Caco-2 (cell line): ENCODE measurements at regions of chr22 and their contacts with region 1.

Region 1: DNA sequence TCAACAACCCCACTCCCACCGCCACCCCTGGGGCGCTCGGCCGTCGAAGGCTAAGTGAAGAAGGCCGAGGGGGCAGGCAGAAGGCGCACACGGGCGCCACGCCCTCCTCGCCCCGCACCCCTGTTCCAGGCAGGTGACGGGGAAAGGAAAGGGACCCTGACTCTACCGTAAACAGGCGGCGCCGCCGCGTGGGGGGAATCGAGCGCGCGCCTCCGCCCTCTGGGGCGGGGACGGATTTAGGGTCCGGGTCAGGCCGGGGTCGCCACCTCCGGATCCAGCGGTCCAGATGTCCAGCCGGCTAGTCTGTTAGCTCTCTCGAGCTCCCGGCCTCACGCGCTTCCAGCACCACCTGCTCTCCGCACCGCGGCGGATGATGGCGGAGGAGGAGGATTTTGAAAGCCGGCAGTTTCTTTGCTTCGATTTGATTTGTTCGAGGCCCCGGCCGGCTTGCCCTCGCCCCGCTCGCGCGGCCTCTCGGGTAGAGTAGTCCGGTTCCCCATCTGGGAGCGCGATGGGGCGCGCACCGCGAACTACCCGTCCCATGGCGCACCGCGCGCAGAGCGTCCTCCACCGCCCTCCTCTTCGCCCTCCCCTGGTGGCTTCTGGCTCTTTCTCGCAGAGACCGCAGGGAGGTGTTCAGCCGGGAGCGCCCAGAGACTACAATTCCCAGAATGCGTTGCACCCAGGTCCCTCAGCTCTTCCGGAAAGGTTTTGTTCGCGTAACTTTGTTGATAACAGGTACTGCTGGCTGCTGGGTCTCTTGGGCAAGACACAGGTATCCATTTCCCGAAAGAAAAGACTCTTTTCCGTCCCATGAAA is at the start of gene RANGAP1:
- DNase-seq: peak; percentile 98 to 99
- H3K4me3 ChIP-seq: peak within 1 kb of the TSS; percentile 78
- H3K4me3 Mint-ChIP-seq: peak within 1 kb of the TSS; percentile 88
- H3K27ac Mint-ChIP-seq: peak within 1 kb of the TSS; percentile 92
- H3K4me1 ChIP-seq: peaks cover 39% of the 10 kb centered on the region
- H3K4me1 Mint-ChIP-seq: peaks cover 32% of the 10 kb centered on the region
- H3K27me3 ChIP-seq: no peaks in the 10 kb centered on the region
- H3K27me3 Mint-ChIP-seq: no peaks in the 10 kb centered on the region
- CTCF ChIP-seq: peak in 1 of 2 experiments; percentile 23
- total RNA-seq, gene RANGAP1: 106 and 112 TPM in 2 replicates

Region 2: DNA sequence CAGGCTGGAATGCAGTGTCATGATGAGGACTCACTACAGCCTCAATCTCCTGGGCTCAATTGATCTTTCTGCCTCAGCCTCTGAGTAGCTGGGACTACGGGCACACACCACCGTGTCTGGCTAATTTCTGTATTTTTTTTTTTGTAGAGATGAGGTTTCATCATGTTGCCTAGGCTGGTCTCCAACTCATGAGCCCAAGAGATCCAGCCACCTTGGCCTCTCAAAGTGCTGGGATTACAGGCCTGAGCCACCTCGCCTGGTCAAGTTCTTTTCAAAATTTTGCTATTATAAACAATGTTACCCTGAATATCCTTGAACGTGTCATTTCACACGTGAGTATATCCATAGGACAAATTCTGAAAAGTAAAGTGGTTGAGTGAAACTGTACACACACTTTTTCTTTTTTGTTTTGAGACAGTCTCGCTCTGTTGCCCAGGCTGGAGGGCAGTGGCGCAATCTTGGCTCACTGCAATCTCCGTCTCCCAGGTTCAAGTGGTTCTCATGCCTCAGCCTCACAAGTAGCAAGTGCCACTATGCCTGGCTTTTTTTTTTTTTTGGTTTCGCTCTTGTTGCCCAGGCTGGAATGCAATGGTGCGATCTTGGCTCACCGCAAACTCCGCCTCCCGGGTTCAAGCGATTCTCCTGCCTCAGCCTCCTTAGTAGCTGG is 215.2 kb before region 1 on chr22:
- CTCF ChIA-PET with region 1: no interaction called
- POLR2A ChIA-PET with region 1: no interaction called
- intact Hi-C with region 1: no loop called
- DNase-seq: no peak
- H3K4me3 ChIP-seq: no peak overlapping the region
- H3K4me3 Mint-ChIP-seq: no peak overlapping the region
- H3K27ac Mint-ChIP-seq: no peak overlapping the region
- H3K4me1 ChIP-seq: no peaks in the 10 kb centered on the region
- H3K4me1 Mint-ChIP-seq: no peaks in the 10 kb centered on the region
- H3K27me3 ChIP-seq: no peaks in the 10 kb centered on the region
- H3K27me3 Mint-ChIP-seq: no peaks in the 10 kb centered on the region
- CTCF ChIP-seq: no peak

Region 3: GRCh38 chr22:41301105-41302020 is 15.3 kb after region 1 on chr22 and contains the start of gene ZC3H7B:
- CTCF ChIA-PET with region 1: interaction called, 11 read pairs
- POLR2A ChIA-PET with region 1: interaction called, 15 read pairs
- intact Hi-C with region 1: loop called (anchors 2 kb)
- DNase-seq: peak; percentile 83 to 88
- H3K4me3 ChIP-seq: peak within 1 kb of the TSS; percentile 58
- H3K4me3 Mint-ChIP-seq: peak within 1 kb of the TSS; percentile 68
- H3K27ac Mint-ChIP-seq: peak within 1 kb of the TSS; percentile 48
- H3K4me1 ChIP-seq: peaks cover 27% of the 10 kb centered on the region
- H3K4me1 Mint-ChIP-seq: peaks cover 20% of the 10 kb centered on the region
- H3K27me3 ChIP-seq: no peaks in the 10 kb centered on the region
- H3K27me3 Mint-ChIP-seq: no peaks in the 10 kb centered on the region
- CTCF ChIP-seq: peak; percentile 29 to 73
- total RNA-seq, gene ZC3H7B: 55.0 and 60.6 TPM in 2 replicates